B cell (primary cell): ENCODE measurements at regions of chr19 and their contacts with region 1.

Region 1: DNA sequence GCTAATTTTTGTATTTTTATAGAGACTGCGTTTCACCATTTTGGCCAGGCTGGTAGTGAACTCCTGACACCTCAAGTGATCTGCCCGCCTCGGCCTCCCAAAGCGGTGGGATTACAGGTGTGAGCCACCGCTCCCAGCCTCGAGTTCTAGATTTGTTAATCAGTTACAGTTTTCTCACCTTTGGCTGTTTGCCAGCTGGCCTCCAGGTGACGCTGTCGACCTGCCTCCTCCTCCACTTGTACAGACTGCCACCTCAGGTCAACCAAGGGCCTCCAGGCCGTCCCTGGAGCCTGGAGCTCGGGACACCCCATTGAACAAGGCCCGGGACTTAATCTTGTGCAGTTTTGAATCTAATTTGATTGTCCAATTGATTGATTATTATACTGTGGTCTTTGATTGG is 45.5 kb downstream of the IER2 start:
- DNase-seq: peak; percentile 77
- ATAC-seq: peak; percentile 67
- H3K4me3 ChIP-seq: no peak overlapping the region
- H3K4me3 Mint-ChIP-seq: no peak overlapping the region
- H3K27ac ChIP-seq: no peak overlapping the region
- H3K27ac Mint-ChIP-seq: peak overlapping the region; percentile 67
- H3K4me1 ChIP-seq: peaks cover 26 to 35% of the 10 kb centered on the region in 2 donors
- H3K4me1 Mint-ChIP-seq: peaks cover 21% of the 10 kb centered on the region
- H3K27me3 ChIP-seq: no peaks in the 10 kb centered on the region
- H3K27me3 Mint-ChIP-seq: no peaks in the 10 kb centered on the region
- CTCF ChIP-seq: peak; percentile 82

Region 2: DNA sequence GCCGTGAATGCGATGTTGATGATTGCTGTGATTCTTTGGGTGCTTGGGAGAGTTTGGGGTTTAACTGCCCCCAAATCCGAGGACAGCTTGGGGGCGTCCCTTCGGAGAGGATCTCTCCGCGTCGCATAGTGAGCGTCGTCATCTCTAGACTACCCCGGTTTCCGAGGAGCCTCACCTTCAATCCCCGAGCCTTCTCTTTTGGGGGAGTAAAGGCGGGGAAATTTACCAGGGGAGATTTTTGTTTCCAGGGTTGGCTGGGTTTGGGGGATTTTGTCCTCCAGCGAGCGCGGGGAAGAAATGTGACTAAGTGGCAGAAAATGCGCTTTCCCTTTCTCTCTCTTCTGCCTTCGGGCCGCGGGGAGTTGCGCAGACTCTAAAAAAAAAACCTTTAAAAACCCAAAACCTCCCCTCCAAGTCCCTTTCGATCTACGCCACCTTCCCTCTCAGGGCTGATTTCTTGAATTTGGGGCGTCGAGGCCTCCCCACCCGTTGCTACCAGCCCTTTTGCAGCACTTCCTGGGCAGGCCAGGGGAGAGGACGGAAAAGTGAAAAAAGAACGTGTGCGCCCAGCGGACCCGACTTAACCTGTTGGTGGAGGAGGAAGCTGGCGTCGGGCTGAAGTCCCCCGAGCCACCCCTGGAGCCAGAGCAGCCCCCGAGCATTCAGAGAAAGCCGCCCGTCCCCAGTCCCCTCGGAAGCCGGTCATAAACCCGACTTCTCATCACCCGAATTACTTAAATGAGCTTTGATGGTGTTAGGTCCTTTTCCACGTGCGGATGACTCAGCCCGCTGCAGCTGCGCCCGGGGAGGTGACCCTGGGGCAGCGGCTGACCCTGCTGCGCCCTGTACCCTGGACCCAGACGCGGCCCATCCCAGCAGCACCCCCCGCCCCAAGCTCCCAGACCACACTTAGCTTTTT is 182.7 kb before region 1 on chr19:
- CTCF ChIA-PET with region 1: no interaction called
- POLR2A ChIA-PET with region 1: no interaction called
- intact Hi-C with region 1: no loop called
- DNase-seq: peak; percentile 70
- ATAC-seq: peak; percentile 49
- H3K4me3 ChIP-seq: peak overlapping the region in 4 of 5 experiments; percentile 23 to 71 (median 55)
- H3K4me3 Mint-ChIP-seq: peak overlapping the region; percentile 92
- H3K27ac ChIP-seq: no peak overlapping the region
- H3K27ac Mint-ChIP-seq: peak overlapping the region; percentile 63
- H3K4me1 ChIP-seq: peaks cover 35 to 49% of the 10 kb centered on the region in 2 donors
- H3K4me1 Mint-ChIP-seq: peaks cover 38% of the 10 kb centered on the region
- H3K27me3 ChIP-seq: peaks cover 0 to 72% (median 38%) of the 10 kb centered on the region in 4 experiments
- H3K27me3 Mint-ChIP-seq: peaks cover 65% of the 10 kb centered on the region
- CTCF ChIP-seq: no peak

Region 3: DNA sequence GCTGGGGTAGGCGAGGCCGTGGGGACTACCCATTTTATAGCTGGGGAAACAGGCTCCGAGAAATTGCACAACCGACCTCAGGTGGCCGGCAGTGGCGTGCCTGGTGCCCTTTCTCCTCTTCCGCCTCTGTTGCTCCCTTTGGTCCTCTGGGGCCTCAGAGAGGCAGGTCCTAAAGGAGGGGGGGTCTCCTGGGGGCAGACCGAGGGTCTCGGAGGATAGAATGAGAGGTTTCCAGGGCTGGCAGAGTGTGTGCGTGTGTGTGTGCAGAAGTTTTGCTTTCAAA is 56.8 kb before region 1 on chr19:
- CTCF ChIA-PET with region 1: no interaction called
- POLR2A ChIA-PET with region 1: no interaction called
- intact Hi-C with region 1: no loop called
- DNase-seq: no peak
- ATAC-seq: no peak
- H3K4me3 ChIP-seq: no peak overlapping the region
- H3K4me3 Mint-ChIP-seq: no peak overlapping the region
- H3K27ac ChIP-seq: no peak overlapping the region
- H3K27ac Mint-ChIP-seq: no peak overlapping the region
- H3K4me1 ChIP-seq: no peaks in the 10 kb centered on the region
- H3K4me1 Mint-ChIP-seq: no peaks in the 10 kb centered on the region
- H3K27me3 ChIP-seq: no peaks in the 10 kb centered on the region
- H3K27me3 Mint-ChIP-seq: no peaks in the 10 kb centered on the region
- CTCF ChIP-seq: no peak

Region 4: GRCh38 chr19:13150187-13150930 is 45.3 kb before region 1 on chr19 and contains the starts of genes IER2 and STX10:
- CTCF ChIA-PET with region 1: interaction called, 106 read pairs
- POLR2A ChIA-PET with region 1: interaction called, 50 read pairs
- intact Hi-C with region 1: loop called (anchors 1 kb)
- DNase-seq: peak; percentile 96
- ATAC-seq: peak; percentile 53
- H3K4me3 ChIP-seq: peak within 1 kb of the TSS; percentile 82 to 100 (median 98)
- H3K4me3 Mint-ChIP-seq: peak within 1 kb of the TSS; percentile 92
- H3K27ac ChIP-seq: peak within 1 kb of the TSS; percentile 87 to 96
- H3K27ac Mint-ChIP-seq: peak within 1 kb of the TSS; percentile 94
- H3K4me1 ChIP-seq: peaks cover 9 to 32% of the 10 kb centered on the region in 2 donors
- H3K4me1 Mint-ChIP-seq: peaks cover 33% of the 10 kb centered on the region
- H3K27me3 ChIP-seq: no peaks in the 10 kb centered on the region
- H3K27me3 Mint-ChIP-seq: no peaks in the 10 kb centered on the region
- CTCF ChIP-seq: peak; percentile 66
- total RNA-seq, gene IER2: 181 and 189 TPM in 2 replicates
- total RNA-seq, gene STX10: 48.4 and 59.0 TPM in 2 replicates

Region 5: GRCh38 chr19:13172068-13172896 is 23.4 kb before region 1 on chr19:
- CTCF ChIA-PET with region 1: interaction called, 154 read pairs
- POLR2A ChIA-PET with region 1: interaction called, 19 read pairs
- intact Hi-C with region 1: no loop called
- DNase-seq: peak; percentile 46
- ATAC-seq: no peak
- H3K4me3 ChIP-seq: peak overlapping the region in 1 of 5 experiments; percentile 12
- H3K4me3 Mint-ChIP-seq: peak overlapping the region; percentile 75
- H3K27ac ChIP-seq: peak overlapping the region; percentile 59 to 72
- H3K27ac Mint-ChIP-seq: peak overlapping the region; percentile 93
- H3K4me1 ChIP-seq: peaks cover 60 to 77% of the 10 kb centered on the region in 2 donors
- H3K4me1 Mint-ChIP-seq: peaks cover 63% of the 10 kb centered on the region
- H3K27me3 ChIP-seq: no peaks in the 10 kb centered on the region
- H3K27me3 Mint-ChIP-seq: no peaks in the 10 kb centered on the region
- CTCF ChIP-seq: no peak

Region 6: DNA sequence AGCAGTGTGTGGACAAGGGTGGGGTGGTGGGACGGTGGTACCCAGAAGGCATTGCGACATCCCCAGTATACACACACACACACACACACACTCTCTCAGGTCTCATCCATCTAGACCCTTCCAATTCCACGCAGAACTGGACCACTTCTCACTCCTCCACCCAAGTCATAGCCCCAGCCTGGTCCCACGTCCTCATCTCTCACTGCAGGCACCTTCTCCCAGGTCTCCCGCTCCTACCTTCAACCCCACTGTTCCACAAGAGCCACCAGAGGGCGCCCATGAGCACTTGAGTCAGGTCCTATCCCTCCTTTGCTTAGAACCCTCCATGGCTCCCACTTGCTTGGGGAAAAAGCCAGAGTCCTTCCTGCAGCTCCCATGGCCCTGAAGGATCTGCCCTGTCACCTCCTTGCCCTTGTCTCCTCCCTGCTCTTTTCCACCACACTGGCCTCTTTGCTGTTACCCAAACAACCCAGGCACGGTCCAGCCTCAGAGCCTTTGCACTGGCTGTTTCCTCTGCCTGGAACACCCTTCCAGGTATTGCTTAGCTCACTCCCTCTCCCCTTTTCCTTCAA is 17.2 kb after region 1 on chr19:
- CTCF ChIA-PET with region 1: interaction called, 64 read pairs
- POLR2A ChIA-PET with region 1: interaction called, 3 read pairs
- intact Hi-C with region 1: no loop called
- DNase-seq: peak; percentile 77
- ATAC-seq: no peak
- H3K4me3 ChIP-seq: no peak overlapping the region
- H3K4me3 Mint-ChIP-seq: peak overlapping the region; percentile 44
- H3K27ac ChIP-seq: no peak overlapping the region
- H3K27ac Mint-ChIP-seq: peak overlapping the region; percentile 29
- H3K4me1 ChIP-seq: peaks cover 41 to 54% of the 10 kb centered on the region in 2 donors
- H3K4me1 Mint-ChIP-seq: peaks cover 62% of the 10 kb centered on the region
- H3K27me3 ChIP-seq: no peaks in the 10 kb centered on the region
- H3K27me3 Mint-ChIP-seq: no peaks in the 10 kb centered on the region
- CTCF ChIP-seq: peak; percentile 69

Region 7: GRCh38 chr19:13262450-13262849 is 66.8 kb after region 1 on chr19:
- CTCF ChIA-PET with region 1: interaction called, 95 read pairs
- POLR2A ChIA-PET with region 1: interaction called, 4 read pairs
- intact Hi-C with region 1: loop called (anchors 1 kb)
- DNase-seq: peak; percentile 76
- ATAC-seq: peak; percentile 22
- H3K4me3 ChIP-seq: no peak overlapping the region
- H3K4me3 Mint-ChIP-seq: no peak overlapping the region
- H3K27ac ChIP-seq: no peak overlapping the region
- H3K27ac Mint-ChIP-seq: peak overlapping the region; percentile 67
- H3K4me1 ChIP-seq: peaks cover 16 to 20% of the 10 kb centered on the region in 2 donors
- H3K4me1 Mint-ChIP-seq: peaks cover 19% of the 10 kb centered on the region
- H3K27me3 ChIP-seq: peaks cover 0 to 7% (median 1%) of the 10 kb centered on the region in 4 experiments
- H3K27me3 Mint-ChIP-seq: peaks cover 15% of the 10 kb centered on the region
- CTCF ChIP-seq: peak; percentile 71

Region 8: DNA sequence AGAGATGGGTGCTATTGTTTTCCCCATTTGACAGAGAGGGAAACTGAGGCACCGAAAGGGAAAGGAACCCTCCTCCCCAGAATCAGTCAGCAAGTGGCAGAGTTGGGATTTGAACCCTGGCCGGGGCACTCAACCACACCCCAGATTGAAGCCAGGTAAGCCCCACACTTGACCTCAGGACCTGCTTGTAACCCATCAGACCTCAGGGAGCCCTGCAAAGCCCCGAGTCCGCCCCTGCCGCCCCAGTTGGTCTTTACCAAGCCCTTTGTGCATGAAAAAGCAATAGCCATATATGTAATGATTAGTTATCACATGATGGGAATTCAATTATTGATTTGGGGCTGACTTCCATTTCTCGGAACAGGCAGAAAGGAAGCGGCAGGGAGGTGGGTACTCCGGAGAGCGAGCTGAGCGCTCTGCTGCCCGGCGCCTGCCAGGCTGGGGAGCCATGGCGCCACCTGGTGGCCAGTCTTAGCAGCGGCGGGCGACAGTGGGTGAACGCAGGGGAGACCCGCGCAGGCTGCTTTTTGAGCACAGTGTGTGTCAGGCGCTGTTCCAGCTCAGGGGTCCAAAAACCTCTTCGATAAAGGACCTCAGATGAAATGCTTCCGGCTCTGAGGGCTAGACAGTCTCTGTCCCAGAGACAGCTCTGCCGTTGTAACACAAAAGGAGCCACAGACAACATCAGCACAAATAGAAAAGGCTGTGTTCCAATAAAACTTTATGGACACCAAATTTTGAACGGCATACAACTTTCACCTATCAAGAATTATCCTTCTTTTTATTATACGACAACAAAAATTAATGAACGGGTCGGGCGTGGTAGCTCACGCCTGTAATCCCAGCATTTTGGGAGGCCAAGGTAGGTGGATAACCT is 393.5 kb after region 1 on chr19:
- CTCF ChIA-PET with region 1: interaction called, 19 read pairs
- POLR2A ChIA-PET with region 1: no interaction called
- intact Hi-C with region 1: loop called (anchors 1 kb)
- DNase-seq: peak; percentile 85
- ATAC-seq: peak; percentile 99
- H3K4me3 ChIP-seq: no peak overlapping the region
- H3K4me3 Mint-ChIP-seq: no peak overlapping the region
- H3K27ac ChIP-seq: no peak overlapping the region
- H3K27ac Mint-ChIP-seq: no peak overlapping the region
- H3K4me1 ChIP-seq: peaks cover 0 to 7% of the 10 kb centered on the region in 2 donors
- H3K4me1 Mint-ChIP-seq: peaks cover 1% of the 10 kb centered on the region
- H3K27me3 ChIP-seq: peaks cover 0 to 8% (median 0%) of the 10 kb centered on the region in 4 experiments
- H3K27me3 Mint-ChIP-seq: peaks cover 25% of the 10 kb centered on the region
- CTCF ChIP-seq: peak; percentile 95

Region 9: GRCh38 chr19:13681509-13681908 is 485.8 kb after region 1 on chr19:
- CTCF ChIA-PET with region 1: no interaction called
- POLR2A ChIA-PET with region 1: no interaction called
- intact Hi-C with region 1: no loop called
- DNase-seq: no peak
- ATAC-seq: no peak
- H3K4me3 ChIP-seq: no peak overlapping the region
- H3K4me3 Mint-ChIP-seq: no peak overlapping the region
- H3K27ac ChIP-seq: no peak overlapping the region
- H3K27ac Mint-ChIP-seq: no peak overlapping the region
- H3K4me1 ChIP-seq: peaks cover 0 to 3% of the 10 kb centered on the region in 2 donors
- H3K4me1 Mint-ChIP-seq: peaks cover 3% of the 10 kb centered on the region
- H3K27me3 ChIP-seq: peaks cover 0 to 9% (median 0%) of the 10 kb centered on the region in 4 experiments
- H3K27me3 Mint-ChIP-seq: peaks cover 24% of the 10 kb centered on the region
- CTCF ChIP-seq: no peak